IMR-90 (cell line): ENCODE measurements at regions of chr10 and their contacts with region 1.

Region 1: GRCh38 chr10:62811159-62811875 is 4.8 kb downstream of the EGR2 start:
- DNase-seq: no peak
- ATAC-seq: no peak
- H3K4me3 ChIP-seq: no peak overlapping the region
- H3K27ac ChIP-seq: no peak overlapping the region
- H3K4me1 ChIP-seq: peaks cover 7% of the 10 kb centered on the region; the same call in 1 of the 2 replicates
- H3K27me3 ChIP-seq: peaks cover 22% of the 10 kb centered on the region
- CTCF ChIP-seq: no peak
- POLR2A ChIP-seq: peak; percentile 0; the same call in 1 of the 2 replicates
- RAD21 ChIP-seq: no peak

Region 2: GRCh38 chr10:61992671-61993668 is 818.3 kb before region 1 on chr10:
- CTCF ChIA-PET with region 1: no interaction called
- POLR2A ChIA-PET with region 1: no interaction called
- dilution Hi-C with region 1: no loop called
- in situ Hi-C with region 1: no loop called
- intact Hi-C with region 1: no loop called
- DNase-seq: peak; percentile 88
- ATAC-seq: peak; percentile 69
- H3K4me3 ChIP-seq: peak overlapping the region; percentile 46; the same call in 1 of the 2 replicates
- H3K27ac ChIP-seq: peak overlapping the region; percentile 93
- H3K4me1 ChIP-seq: peaks cover 12% of the 10 kb centered on the region
- H3K27me3 ChIP-seq: no peaks in the 10 kb centered on the region
- CTCF ChIP-seq: no peak
- POLR2A ChIP-seq: no peak
- RAD21 ChIP-seq: no peak

Region 3: DNA sequence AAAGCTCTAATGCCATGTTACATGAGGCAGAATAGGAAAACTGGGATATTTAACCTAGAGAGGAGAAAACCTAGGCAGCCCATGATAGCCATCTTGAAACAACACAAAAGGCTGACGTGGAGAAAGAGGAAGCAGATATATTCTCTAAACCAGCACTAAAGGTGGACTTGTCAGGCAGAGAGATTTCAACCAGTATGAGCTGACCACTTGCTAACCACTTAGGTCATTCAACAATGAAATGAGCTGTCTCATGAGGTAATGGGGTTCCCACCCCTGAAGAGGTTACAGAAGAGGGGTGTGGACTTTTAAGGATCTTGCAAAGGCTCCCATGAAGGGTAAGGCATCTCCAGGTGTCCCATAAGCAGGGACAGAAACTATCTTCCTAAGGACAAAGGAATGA is 31.7 kb after region 1 on chr10:
- CTCF ChIA-PET with region 1: no interaction called
- POLR2A ChIA-PET with region 1: no interaction called
- dilution Hi-C with region 1: no loop called
- in situ Hi-C with region 1: no loop called
- intact Hi-C with region 1: no loop called
- DNase-seq: no peak
- ATAC-seq: no peak
- H3K4me3 ChIP-seq: no peak overlapping the region
- H3K27ac ChIP-seq: no peak overlapping the region
- H3K4me1 ChIP-seq: no peaks in the 10 kb centered on the region
- H3K27me3 ChIP-seq: peaks cover 7% of the 10 kb centered on the region
- CTCF ChIP-seq: no peak
- POLR2A ChIP-seq: no peak
- RAD21 ChIP-seq: no peak

Region 4: GRCh38 chr10:63008491-63008890 is 197.2 kb after region 1 on chr10:
- CTCF ChIA-PET with region 1: no interaction called
- POLR2A ChIA-PET with region 1: no interaction called
- dilution Hi-C with region 1: no loop called
- in situ Hi-C with region 1: no loop called
- intact Hi-C with region 1: no loop called
- DNase-seq: no peak
- ATAC-seq: no peak
- H3K4me3 ChIP-seq: no peak overlapping the region
- H3K27ac ChIP-seq: no peak overlapping the region
- H3K4me1 ChIP-seq: no peaks in the 10 kb centered on the region
- H3K27me3 ChIP-seq: peaks cover 3% of the 10 kb centered on the region; the same call in 1 of the 2 replicates
- CTCF ChIP-seq: no peak
- POLR2A ChIP-seq: no peak
- RAD21 ChIP-seq: no peak

Region 5: GRCh38 chr10:63042256-63042655 is 230.9 kb after region 1 on chr10:
- CTCF ChIA-PET with region 1: no interaction called
- POLR2A ChIA-PET with region 1: no interaction called
- dilution Hi-C with region 1: no loop called
- in situ Hi-C with region 1: no loop called
- intact Hi-C with region 1: no loop called
- DNase-seq: no peak
- ATAC-seq: no peak
- H3K4me3 ChIP-seq: no peak overlapping the region
- H3K27ac ChIP-seq: no peak overlapping the region
- H3K4me1 ChIP-seq: no peaks in the 10 kb centered on the region
- H3K27me3 ChIP-seq: no peaks in the 10 kb centered on the region
- CTCF ChIP-seq: no peak
- POLR2A ChIP-seq: no peak
- RAD21 ChIP-seq: no peak

Region 6: GRCh38 chr10:63145782-63146181 is 334.5 kb after region 1 on chr10:
- CTCF ChIA-PET with region 1: no interaction called
- POLR2A ChIA-PET with region 1: no interaction called
- dilution Hi-C with region 1: no loop called
- in situ Hi-C with region 1: loop called (anchors 10 kb)
- intact Hi-C with region 1: loop called (anchors 5 kb)
- DNase-seq: peak; percentile 58
- ATAC-seq: peak; percentile 79
- H3K4me3 ChIP-seq: no peak overlapping the region
- H3K27ac ChIP-seq: no peak overlapping the region
- H3K4me1 ChIP-seq: 0 out of 2 replicates have a peak, but pooled peaks cover 2% of the 10 kb centered on the region
- H3K27me3 ChIP-seq: no peaks in the 10 kb centered on the region
- CTCF ChIP-seq: no peak
- POLR2A ChIP-seq: no peak
- RAD21 ChIP-seq: no peak